Heart left ventricle (tissue), 16 donors: ENCODE measurements at regions of chr1 and their contacts with region 1.

Region 1: DNA sequence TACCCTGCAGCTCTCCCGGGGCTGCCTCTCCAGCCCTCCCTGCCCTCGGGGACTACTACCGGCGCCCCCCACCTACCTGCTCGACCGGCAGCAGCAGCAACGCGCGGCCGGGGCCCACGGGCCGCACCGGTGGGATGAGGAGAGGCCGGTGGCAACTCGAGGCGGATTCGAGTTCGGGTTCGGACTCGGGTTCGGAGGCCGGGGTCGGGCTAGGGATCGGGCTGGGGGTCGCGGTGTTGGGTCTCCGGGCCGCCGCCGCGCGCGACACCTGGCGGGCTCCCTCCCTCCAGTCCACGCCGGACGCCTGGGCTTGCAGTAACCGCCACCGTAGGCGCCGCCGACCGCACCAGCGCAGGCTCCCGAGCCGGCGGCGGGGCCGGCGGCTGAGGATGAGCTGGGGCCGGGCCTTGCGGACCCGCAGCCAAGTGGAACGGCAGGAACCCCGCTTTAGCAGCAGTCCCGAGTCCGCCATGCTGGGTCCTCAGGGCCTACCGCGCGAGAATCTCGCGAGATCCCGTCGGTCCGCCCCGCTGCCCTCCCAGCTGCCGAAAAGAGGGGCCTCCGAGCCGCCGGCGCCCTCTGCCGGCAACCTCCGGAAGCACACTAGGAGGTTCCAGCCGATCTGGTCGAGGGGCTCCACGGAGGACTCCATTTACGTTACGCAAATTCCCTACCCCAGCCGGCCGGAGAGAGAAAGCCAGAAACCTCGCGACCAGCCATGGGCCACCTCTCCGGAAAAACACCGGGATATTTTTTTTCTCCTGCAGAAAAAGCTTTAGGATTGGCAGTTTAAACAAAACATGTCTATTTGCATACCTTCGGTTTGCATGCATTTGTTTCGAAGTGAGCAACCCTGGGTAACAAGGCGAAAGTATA is at the start of gene NOL9:
- DNase-seq: peak; percentile 94 to 98 (median 96)
- ATAC-seq: peak; percentile 91 to 98 (median 98)
- H3K4me3 ChIP-seq: peak within 1 kb of the TSS; percentile 88 to 100 (median 96)
- H3K27ac ChIP-seq: peak within 1 kb of the TSS; percentile 70 to 90 (median 82)
- H3K4me1 ChIP-seq: peaks cover 4 to 24% (median 19%) of the 10 kb centered on the region in 12 donors
- H3K27me3 ChIP-seq: no peaks in the 10 kb centered on the region
- CTCF ChIP-seq: peak; percentile 95 to 99 (median 98)
- POLR2A ChIP-seq: peak in 1 of 2 donors; percentile 60
- total RNA-seq, gene NOL9: 13.1 to 20.6 (median 16.5) TPM

Region 2: GRCh38 chr1:6141592-6141991 is 412.7 kb before region 1 on chr1:
- intact Hi-C with region 1: no loop called
- DNase-seq: no peak
- ATAC-seq: no peak
- H3K4me3 ChIP-seq: no peak overlapping the region
- H3K27ac ChIP-seq: no peak overlapping the region
- H3K4me1 ChIP-seq: no peaks in the 10 kb centered on the region
- H3K27me3 ChIP-seq: peaks cover 0 to 10% (median 4%) of the 10 kb centered on the region in 9 donors
- CTCF ChIP-seq: no peak
- POLR2A ChIP-seq: no peak

Region 3: DNA sequence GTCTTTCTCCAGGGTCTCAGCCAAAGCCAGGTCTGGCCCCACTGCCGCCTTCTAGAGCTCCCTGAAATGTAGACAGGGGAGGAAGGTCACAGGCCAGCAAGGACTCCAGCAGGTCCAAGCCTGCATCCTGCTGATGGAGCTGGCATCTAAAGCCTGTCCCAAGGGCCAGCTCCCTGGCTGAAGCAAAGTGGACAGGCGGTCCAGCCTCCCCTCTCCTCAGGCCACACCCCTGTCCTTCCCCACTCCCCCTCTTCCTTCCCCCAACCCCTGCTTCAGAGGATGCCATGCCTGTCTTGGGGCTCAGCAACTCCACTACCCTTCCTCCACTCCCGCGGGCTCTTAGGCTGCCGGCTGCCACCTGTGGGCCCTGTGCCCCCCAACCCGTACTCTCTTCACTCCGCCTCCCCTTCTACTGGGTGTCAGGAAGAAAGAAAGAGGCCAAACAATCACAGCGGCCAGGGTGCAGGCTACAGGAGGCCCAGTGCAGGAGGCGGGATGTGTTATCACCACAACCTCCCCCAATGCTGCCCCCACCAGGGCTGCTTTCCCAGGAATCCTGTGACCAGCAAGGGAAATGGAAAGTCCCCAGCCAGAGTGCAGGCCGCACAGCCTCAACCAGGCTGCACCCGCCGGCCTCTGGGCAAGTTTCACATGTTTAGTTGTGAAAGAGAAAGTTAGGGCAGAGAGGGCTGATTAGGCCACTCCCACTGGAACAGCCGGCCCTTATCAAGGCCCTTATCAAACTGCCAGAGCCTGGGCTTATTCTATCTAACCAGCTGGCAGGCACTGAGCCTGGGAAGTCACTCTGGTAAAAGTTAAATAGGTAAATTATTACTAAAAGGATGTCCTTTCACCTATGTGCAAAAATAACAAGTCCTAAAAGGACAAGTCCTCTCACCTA is 194.8 kb before region 1 on chr1:
- intact Hi-C with region 1: no loop called
- DNase-seq: peak; percentile 51 to 75 (median 66)
- ATAC-seq: peak; percentile 29 to 83 (median 71)
- H3K4me3 ChIP-seq: peak overlapping the region in 4 of 12 donors; percentile 4 to 26 (median 13)
- H3K27ac ChIP-seq: peak overlapping the region; percentile 52 to 89 (median 76)
- H3K4me1 ChIP-seq: peaks cover 6 to 36% (median 30%) of the 10 kb centered on the region in 12 donors
- H3K27me3 ChIP-seq: no peaks in the 10 kb centered on the region
- CTCF ChIP-seq: no peak
- POLR2A ChIP-seq: no peak

Region 4: DNA sequence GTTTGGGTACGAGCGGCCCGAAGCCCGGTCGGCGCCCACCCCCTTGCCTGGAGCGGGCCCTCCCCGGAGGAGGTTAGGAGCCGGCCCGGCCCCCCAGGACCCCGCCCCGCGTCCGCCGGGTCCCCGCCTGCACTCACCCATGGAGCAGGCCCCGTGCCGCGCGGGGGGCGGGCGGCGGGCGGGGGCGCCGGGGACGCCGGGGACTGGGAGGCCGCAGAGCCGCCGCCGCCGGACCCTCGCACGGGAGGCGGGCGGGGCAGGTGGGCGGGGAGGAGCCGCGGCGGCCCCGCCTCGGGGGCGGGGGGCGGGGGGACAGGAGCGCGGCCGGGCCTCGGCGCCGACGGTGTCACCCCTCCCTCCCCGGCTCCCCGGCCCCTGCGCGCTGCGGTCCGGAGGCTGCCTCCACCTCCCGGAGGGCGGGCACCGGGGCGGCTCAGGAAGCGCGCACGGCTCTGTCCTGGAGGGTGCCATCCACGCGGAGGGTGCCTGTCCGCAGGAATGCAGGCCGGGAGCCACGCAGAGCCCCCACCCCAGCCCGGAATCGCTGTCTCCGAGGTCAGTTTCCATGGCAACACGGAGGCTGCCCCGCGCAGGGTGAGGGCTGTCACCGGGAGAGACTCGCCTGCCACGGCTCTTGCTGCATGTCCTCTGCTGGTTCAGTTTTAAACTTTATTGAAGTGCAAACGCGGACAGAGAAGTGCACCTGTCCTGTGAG is 56.9 kb before region 1 on chr1:
- intact Hi-C with region 1: loop called in 1 of 10 experiments (anchors 5 kb)
- DNase-seq: peak; percentile 67 to 83 (median 73)
- ATAC-seq: peak in 3 of 4 donors; percentile 25 to 48 (median 48)
- H3K4me3 ChIP-seq: peak overlapping the region; percentile 50 to 81 (median 70)
- H3K27ac ChIP-seq: peak overlapping the region in 11 of 12 donors; percentile 49 to 87 (median 78)
- H3K4me1 ChIP-seq: peaks cover 6 to 85% (median 55%) of the 10 kb centered on the region in 12 donors
- H3K27me3 ChIP-seq: peaks cover 0 to 16% (median 0%) of the 10 kb centered on the region in 9 donors
- CTCF ChIP-seq: no peak
- POLR2A ChIP-seq: peak in 1 of 2 donors; percentile 19

Region 5: DNA sequence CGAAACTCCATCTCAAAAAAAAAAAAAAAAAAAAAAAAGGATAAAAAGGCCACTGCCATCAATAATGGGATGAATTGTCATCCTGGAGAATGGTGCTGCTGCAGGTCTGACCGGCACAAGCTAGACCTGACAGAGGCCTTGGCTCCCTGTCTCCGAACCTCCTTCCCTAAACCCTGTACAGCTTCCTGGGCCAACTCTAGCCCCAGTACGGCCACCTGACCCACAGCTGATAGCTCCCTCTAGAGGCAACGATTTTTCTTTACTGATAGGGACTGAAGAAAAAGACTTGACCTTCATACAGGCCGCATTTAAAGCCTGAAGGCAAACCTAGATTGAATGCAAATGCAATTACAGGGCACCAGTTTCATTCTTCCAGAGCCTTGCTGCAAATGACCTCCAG is 30.7 kb before region 1 on chr1:
- intact Hi-C with region 1: no loop called
- DNase-seq: peak in 2 of 5 donors; percentile 26 to 38
- ATAC-seq: peak in 3 of 4 donors; percentile 62 to 70 (median 70)
- H3K4me3 ChIP-seq: no peak overlapping the region
- H3K27ac ChIP-seq: no peak overlapping the region
- H3K4me1 ChIP-seq: peaks cover 0 to 20% (median 9%) of the 10 kb centered on the region in 12 donors
- H3K27me3 ChIP-seq: no peaks in the 10 kb centered on the region
- CTCF ChIP-seq: peak; percentile 41 to 68 (median 50)
- POLR2A ChIP-seq: no peak

Region 6: DNA sequence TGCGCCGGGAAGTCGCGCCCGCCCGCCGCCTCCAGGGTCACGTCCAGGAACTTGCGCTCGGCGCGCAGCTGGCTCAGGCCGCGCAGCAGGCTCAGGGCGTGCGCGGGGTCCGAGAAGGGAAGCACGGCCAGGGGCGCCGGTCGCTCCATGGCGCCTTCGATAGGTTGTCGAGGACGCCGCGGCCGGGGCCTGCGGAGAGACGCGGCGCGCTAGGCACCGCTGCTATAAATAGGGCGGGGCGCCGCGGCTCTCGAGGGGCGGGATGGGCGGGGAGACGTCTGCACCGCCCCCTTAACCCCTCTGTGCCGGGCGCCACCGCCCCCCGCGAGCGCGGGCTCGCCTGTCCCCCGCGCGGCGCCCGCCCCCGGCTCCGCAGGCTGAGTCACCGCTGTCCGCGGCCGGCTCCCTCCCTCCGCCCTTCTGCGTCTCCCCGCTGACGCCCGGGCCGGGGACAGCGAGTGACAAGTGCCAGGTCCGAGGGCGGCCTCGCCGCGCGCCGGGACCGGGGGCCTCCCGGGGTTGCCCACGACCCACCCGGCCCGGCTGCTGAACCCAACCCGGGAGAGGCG is 48.5 kb after region 1 on chr1 and contains the start of gene KLHL21:
- intact Hi-C with region 1: loop called in 1 of 10 experiments (anchors 1 kb)
- DNase-seq: peak; percentile 92 to 96 (median 94)
- ATAC-seq: peak; percentile 46 to 85 (median 74)
- H3K4me3 ChIP-seq: peak within 1 kb of the TSS; percentile 72 to 96 (median 86)
- H3K27ac ChIP-seq: peak within 1 kb of the TSS; percentile 92 to 100 (median 99)
- H3K4me1 ChIP-seq: peaks cover 18 to 61% (median 52%) of the 10 kb centered on the region in 12 donors
- H3K27me3 ChIP-seq: no peaks in the 10 kb centered on the region
- CTCF ChIP-seq: no peak
- POLR2A ChIP-seq: peak; percentile 70 to 97
- total RNA-seq, gene KLHL21: 38.7 to 179 (median 65.4) TPM

Region 7: DNA sequence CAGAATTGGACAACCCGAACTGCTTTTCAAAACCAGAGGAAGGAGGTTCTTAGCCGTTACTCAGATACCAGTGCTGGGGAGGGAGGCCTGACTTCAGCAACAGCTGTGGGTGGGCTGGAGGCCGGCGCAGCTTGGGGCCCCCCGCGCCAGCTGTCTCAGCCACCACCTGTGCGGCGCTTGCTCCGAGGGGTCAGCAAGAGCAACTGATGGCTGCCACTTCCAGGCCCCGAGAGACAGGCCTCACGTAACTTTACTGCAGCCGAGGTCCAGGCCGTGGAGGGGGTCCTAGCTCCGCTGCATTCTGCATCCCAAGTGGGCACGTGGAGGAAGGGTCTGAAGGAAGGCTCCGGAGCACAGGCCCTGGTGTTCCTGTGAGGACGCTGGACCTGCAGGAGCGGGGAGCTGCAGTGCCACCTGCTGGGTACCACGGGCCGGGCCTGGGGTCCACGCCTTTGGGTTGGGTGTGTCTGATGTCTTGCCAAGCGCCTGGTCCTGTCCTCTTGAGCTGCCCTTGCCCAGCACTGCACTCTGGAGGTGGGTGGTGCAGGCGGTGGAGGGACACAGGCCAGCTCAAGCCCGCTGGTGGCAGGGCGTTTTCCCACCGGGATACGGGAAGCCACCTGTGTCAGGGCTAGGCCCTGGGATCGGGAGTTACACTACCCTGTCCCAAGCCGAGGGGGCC is 80.2 kb after region 1 on chr1:
- intact Hi-C with region 1: loop called in 4 of 10 experiments (anchors 1 to 5 kb)
- DNase-seq: peak; percentile 61 to 83 (median 80)
- ATAC-seq: peak; percentile 59 to 84 (median 80)
- H3K4me3 ChIP-seq: no peak overlapping the region
- H3K27ac ChIP-seq: peak overlapping the region in 4 of 12 donors; percentile 11 to 48 (median 30)
- H3K4me1 ChIP-seq: peaks cover 0 to 15% (median 0%) of the 10 kb centered on the region in 12 donors
- H3K27me3 ChIP-seq: no peaks in the 10 kb centered on the region
- CTCF ChIP-seq: peak; percentile 19 to 68 (median 53)
- POLR2A ChIP-seq: no peak